ENCODE measurements at regions of chrX and their contacts with region 1.

Region 1: DNA sequence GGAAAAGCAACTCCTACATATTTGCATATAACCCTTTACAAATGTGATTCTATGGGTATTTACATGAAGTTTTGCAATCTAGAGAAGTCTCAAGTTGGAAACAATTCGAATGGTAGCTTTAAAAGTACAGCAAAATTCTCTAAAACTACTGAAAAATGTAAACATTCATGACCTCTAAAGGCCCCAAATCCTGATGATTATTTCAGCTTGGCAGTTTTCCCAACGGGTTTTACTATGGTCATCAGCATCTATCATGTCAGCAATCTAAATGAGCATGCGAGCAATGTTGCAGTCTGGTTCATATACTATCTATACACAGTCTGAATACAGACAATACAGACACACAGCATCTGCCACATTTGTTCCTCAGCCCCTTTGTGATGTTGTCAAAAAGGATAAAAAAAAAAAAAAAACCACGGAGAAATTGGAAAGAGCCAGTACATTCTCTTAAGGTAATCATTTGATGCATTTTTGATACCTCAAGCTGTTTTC is 790.3 kb upstream of the HTR2C start:
- DNase-seq: no peak
- ATAC-seq: no peak
- H3K4me3 Mint-ChIP-seq: no peak overlapping the region
- H3K27ac Mint-ChIP-seq: no peak overlapping the region
- H3K4me1 Mint-ChIP-seq: peaks cover 19% of the 10 kb centered on the region
- H3K27me3 Mint-ChIP-seq: no peaks in the 10 kb centered on the region
- CTCF ChIP-seq: no peak

Region 2: GRCh38 chrX:113868177-113868576 is 74.6 kb after region 1 on chrX:
- CTCF ChIA-PET with region 1: no interaction called
- POLR2A ChIA-PET with region 1: interaction called, 10 read pairs
- intact Hi-C with region 1: no loop called
- DNase-seq: no peak
- ATAC-seq: no peak
- H3K4me3 Mint-ChIP-seq: peak overlapping the region; percentile 66
- H3K27ac Mint-ChIP-seq: peak overlapping the region; percentile 59
- H3K4me1 Mint-ChIP-seq: peaks cover 7% of the 10 kb centered on the region
- H3K27me3 Mint-ChIP-seq: no peaks in the 10 kb centered on the region
- CTCF ChIP-seq: no peak